BJ (cell line): ENCODE measurements at regions of chr6 and their contacts with region 1.

Region 1: GRCh38 chr6:116561377-116562018 is 7.9 kb downstream of the CALHM4 start:
- DNase-seq: no peak
- H3K4me3 ChIP-seq: no peak overlapping the region
- H3K27me3 ChIP-seq: no peaks in the 10 kb centered on the region
- CTCF ChIP-seq: peak; percentile 77

Region 2: GRCh38 chr6:116217069-116217468 is 344.4 kb before region 1 on chr6:
- CTCF ChIA-PET with region 1: interaction called, 12 read pairs
- POLR2A ChIA-PET with region 1: no interaction called
- DNase-seq: no peak
- H3K4me3 ChIP-seq: no peak overlapping the region
- H3K27me3 ChIP-seq: no peaks in the 10 kb centered on the region
- CTCF ChIP-seq: peak; percentile 49

Region 3: DNA sequence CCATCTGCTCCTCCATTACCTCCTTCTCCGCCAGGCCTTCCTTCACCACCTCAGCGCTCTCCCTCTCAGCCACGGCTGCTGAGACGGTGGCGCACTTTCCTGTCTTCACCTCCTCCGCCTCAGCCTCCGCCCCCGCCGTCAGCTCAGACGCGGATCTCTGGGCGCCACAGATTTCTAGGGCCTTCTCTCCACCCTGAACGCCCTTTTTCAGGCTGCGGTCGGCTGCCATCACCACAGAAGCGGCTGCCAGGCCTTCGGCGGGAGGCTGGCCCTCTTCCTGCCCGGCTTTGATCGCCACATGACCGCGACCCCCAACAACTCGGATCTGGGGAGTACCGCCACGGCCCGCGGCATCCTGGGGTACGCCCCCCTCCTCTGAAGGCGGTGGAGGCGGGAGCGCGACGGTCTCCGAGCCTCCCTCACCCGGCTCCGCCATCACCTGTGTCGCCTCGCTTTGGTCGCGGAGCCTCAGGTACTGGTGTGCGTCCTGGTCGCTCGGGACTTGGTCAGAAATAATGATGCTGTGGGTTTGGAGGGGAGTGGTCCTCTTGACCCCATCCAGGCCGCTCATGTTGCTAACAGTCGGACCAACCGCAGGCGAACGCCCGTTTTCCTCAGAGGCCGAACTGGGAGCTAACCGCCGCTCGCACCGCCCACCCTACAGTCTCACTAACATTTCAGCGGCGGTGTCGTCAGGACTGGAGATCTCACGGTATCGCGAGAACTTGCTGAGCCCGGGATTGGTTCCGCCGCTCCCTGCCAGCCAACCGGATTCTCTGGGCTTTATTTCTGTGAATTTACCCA is 282.0 kb before region 1 on chr6 and contains the start of gene TSPYL1:
- CTCF ChIA-PET with region 1: interaction called, 23 read pairs
- POLR2A ChIA-PET with region 1: no interaction called
- DNase-seq: peak; percentile 85
- H3K4me3 ChIP-seq: peak within 1 kb of the TSS; percentile 86
- H3K27me3 ChIP-seq: no peaks in the 10 kb centered on the region
- CTCF ChIP-seq: peak; percentile 20; the same call in 1 of the 2 replicates
- polyA plus RNA-seq, gene TSPYL1: 31.9 and 43.1 TPM in 2 replicates

Region 4: DNA sequence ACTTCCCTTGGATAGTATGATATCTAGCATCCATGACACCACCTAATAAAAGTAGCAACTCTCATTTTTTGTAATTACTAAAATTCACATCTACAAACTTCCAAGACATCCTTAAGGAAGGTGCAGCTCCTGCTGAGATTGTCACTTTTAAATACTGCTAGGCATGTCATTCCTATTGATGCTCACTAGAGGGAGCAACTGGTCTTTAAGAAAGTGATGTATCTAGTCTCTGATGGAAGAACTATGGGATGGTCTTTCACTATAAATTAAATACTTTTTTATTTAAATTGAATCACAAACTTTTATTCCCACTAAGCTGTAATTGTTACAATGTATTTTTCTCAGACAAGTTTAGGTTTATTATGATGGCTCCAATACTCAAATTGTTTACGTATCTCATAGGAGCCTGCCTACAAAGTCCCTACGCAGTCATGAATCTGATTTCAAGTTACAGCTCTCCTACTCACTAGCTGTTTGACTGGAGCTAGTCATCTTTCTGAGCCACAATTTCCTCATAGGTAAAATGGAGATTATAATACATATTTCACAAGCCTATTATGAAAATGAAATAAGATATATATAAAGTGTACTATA is 273.7 kb before region 1 on chr6:
- CTCF ChIA-PET with region 1: interaction called, 26 read pairs
- POLR2A ChIA-PET with region 1: no interaction called
- DNase-seq: no peak
- H3K4me3 ChIP-seq: no peak overlapping the region
- H3K27me3 ChIP-seq: no peaks in the 10 kb centered on the region
- CTCF ChIP-seq: peak; percentile 80

Region 5: GRCh38 chr6:116511404-116512110 is 49.9 kb before region 1 on chr6 and contains the start of gene CALHM5:
- CTCF ChIA-PET with region 1: interaction called, 16 read pairs
- POLR2A ChIA-PET with region 1: no interaction called
- DNase-seq: peak; percentile 58
- H3K4me3 ChIP-seq: peak within 1 kb of the TSS; percentile 46
- H3K27me3 ChIP-seq: no peaks in the 10 kb centered on the region
- CTCF ChIP-seq: peak; percentile 68
- polyA plus RNA-seq, gene CALHM5: 4.4 and 6.6 TPM in 2 replicates

Region 6: GRCh38 chr6:116531675-116532570 is 29.6 kb before region 1 on chr6:
- CTCF ChIA-PET with region 1: interaction called, 127 read pairs
- POLR2A ChIA-PET with region 1: interaction called, 5 read pairs
- DNase-seq: no peak
- H3K4me3 ChIP-seq: no peak overlapping the region
- H3K27me3 ChIP-seq: no peaks in the 10 kb centered on the region
- CTCF ChIP-seq: peak; percentile 76

Region 7: GRCh38 chr6:116542426-116542825 is 19.1 kb before region 1 on chr6:
- CTCF ChIA-PET with region 1: interaction called, 30 read pairs
- POLR2A ChIA-PET with region 1: no interaction called
- DNase-seq: no peak
- H3K4me3 ChIP-seq: no peak overlapping the region
- H3K27me3 ChIP-seq: no peaks in the 10 kb centered on the region
- CTCF ChIP-seq: no peak

Region 8: DNA sequence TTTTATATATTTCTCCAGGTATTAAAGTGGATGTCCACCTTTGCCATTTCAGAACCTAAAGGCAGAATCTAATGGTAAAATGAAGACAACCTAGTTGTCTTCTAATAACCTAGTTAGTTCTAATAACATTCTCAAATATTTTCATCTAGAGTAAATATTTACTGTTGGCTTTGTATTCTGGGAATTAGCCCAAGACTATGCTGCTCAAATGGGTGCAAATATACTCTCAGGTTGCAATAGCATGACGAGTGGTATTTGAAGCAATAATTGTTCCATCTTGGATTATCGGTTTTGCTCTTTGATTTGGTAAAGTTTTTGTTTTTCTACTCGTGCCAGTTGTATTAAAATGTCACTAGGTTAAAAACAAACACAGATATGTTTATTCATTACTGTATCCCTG is 33.7 kb after region 1 on chr6:
- CTCF ChIA-PET with region 1: no interaction called
- POLR2A ChIA-PET with region 1: no interaction called
- DNase-seq: no peak
- H3K4me3 ChIP-seq: no peak overlapping the region
- H3K27me3 ChIP-seq: no peaks in the 10 kb centered on the region
- CTCF ChIP-seq: no peak